OCI-LY7 (cell line): ENCODE measurements at regions of chr9 and their contacts with region 1.

Region 1: DNA sequence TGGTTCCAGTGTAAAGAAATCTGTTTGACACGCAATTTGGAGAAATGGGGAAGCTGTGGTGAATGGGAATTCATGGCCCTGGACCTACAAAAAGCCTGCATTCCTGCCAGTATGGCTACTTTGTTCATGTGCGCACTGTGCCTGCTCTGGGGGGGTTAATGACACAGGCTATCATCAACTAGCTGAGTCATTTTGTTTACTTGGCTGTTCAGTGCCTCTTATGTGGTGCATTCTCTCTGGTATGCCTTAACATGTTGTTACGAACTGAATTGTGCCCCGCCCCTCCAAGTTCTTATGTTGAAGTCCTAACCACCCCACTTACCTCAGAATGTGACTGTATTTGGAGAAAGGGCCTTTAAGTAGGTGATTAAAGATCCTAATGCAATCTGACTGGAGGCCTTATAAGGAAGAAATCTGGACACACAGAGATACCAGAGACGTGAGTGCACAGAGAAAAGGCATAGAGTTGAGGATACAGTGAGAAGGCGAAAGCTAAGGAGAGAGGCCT is 20.4 kb upstream of the UBAP1 start:
- DNase-seq: no peak
- H3K4me3 ChIP-seq: no peak overlapping the region
- H3K27ac ChIP-seq: no peak overlapping the region
- H3K4me1 ChIP-seq: peaks cover 2% of the 10 kb centered on the region
- CTCF ChIP-seq: no peak

Region 2: GRCh38 chr9:34010979-34011378 is 147.4 kb before region 1 on chr9:
- CTCF ChIA-PET with region 1: no interaction called
- POLR2A ChIA-PET with region 1: no interaction called
- intact Hi-C with region 1: loop called (anchors 10 kb)
- DNase-seq: peak; percentile 64
- H3K4me3 ChIP-seq: no peak overlapping the region
- H3K27ac ChIP-seq: no peak overlapping the region
- H3K4me1 ChIP-seq: no peaks in the 10 kb centered on the region
- CTCF ChIP-seq: peak; percentile 85

Region 3: GRCh38 chr9:34145165-34145564 is 13.3 kb before region 1 on chr9:
- CTCF ChIA-PET with region 1: no interaction called
- POLR2A ChIA-PET with region 1: interaction called, 11 read pairs
- intact Hi-C with region 1: no loop called
- DNase-seq: no peak
- H3K4me3 ChIP-seq: no peak overlapping the region
- H3K27ac ChIP-seq: no peak overlapping the region
- H3K4me1 ChIP-seq: no peaks in the 10 kb centered on the region
- CTCF ChIP-seq: no peak

Region 4: DNA sequence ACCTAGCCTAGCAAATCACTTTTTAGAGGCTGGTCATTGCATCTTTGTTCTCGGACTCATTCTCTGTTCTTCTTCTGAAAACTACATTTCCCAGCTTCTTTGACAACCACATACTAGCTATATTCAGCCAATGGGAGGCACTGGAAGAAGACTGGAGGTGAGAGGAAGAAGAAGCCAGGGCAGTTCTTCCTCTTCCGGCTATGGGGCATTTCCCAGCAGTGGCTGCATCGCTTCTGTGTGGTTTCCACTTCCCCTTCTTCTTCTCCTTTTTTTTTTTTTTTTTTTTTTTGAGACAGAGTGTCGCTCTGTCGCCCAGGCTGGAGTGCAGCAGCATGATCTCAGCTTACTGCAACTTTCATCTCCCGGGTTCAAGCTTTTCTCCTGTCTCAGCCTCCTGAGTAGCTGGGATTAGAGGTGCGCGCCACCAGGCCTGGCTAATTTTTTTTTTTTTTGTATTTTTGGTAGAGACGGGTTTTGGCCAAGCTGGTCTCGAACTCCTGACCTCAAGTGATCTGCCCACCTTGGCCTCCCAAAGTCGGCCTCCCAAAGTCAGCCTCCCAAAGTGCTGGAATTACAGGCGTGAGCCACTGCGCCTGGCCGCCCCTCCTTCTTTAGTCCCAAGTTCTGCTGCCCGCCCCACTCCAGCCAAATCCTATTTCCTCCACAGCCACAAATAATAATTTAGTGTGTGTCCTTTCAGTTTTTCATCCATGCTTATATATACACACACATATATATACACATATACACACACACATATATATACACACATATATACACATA is 13.5 kb after region 1 on chr9:
- CTCF ChIA-PET with region 1: no interaction called
- POLR2A ChIA-PET with region 1: interaction called, 6 read pairs
- intact Hi-C with region 1: loop called (anchors 1 kb)
- DNase-seq: peak; percentile 74
- H3K4me3 ChIP-seq: no peak overlapping the region
- H3K27ac ChIP-seq: no peak overlapping the region
- H3K4me1 ChIP-seq: peaks cover 12% of the 10 kb centered on the region
- CTCF ChIP-seq: no peak